ENCODE measurements at regions of chr1 and their contacts with region 1.

Region 1: DNA sequence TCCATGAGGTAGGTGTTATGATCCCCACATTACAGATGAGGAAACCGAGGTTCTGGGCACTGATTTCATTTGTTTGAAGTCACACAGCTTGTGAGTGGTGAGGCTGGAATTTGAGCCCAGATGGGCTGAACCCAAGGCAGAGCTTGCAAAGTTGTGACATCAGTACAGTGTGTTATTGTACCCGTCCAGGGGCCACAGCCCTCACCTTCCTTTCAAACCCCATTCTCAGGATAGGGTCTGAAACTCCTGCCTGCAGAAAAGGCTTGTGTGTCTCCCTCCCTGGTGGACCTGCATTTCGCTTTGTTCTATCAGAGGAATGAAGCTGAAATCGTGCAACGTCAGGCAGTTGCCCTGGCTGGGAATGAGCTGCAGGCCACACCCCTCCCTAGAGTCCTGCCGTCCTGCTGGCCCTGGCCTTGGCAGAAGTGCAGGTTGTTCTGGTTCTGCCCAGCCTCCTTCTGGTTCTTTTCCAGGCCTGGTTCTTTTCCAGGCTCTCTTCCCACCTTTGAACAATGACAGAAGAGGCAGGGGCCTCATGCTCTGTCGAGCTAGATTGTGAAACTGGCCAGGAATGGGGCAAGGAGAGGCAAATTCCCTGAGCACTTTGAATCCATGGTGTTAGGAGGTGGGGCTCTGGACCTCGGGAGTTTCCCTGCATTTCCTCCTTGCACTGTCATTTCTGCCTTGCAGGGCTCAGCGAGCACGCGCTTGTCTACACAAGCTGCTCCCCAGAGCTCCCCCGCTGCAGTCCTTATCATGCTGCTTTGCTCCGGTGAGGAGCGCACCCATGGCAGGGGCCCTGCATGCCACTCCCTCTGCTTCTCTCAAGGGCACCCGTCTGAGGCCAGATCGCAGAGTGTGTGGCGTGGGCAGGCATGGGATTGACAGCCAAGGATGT is 8.2 kb upstream of the MYOM3 start:
- DNase-seq: peak; percentile 72
- H3K4me3 ChIP-seq: no peak overlapping the region
- H3K27ac ChIP-seq: no peak overlapping the region
- H3K4me1 ChIP-seq: peaks cover 24% of the 10 kb centered on the region
- H3K27me3 ChIP-seq: no peaks in the 10 kb centered on the region
- CTCF ChIP-seq: no peak

Region 2: DNA sequence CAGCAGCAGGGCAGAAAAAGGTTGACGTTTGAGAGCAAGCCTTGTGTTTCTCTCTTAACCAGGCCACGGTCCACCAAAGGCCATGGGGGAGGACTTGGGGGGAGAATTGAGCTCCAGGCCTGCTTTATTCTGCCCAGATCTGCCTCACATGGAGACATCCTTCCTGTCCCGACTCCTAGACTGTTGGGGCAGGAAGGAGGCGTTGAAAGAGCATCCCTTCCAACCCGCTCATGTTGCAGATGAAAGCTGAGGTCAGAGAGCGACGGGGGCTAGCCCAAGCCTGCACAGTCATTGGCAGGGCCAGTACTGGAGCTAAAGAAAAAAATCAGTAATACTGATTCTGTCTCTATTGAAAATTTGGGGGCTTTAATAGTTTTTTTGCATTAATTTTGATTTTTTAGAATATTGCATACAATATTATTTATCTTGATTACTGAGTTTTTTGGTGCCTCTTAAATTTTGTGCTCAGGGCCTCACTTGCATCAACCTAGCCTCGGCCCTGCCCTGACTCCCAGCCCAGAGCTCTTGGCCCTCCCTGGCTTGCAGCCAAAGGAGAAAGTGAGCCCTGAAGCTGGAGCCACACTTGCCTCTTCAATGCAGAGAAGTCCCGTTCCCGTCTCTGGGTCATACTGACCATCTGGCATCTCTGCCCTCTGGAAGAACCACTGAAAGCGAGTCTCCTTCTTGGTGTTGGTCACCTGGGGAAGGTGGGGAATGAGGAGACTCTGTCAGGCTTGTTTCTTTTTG is 54.6 kb before region 1 on chr1:
- CTCF ChIA-PET with region 1: no interaction called
- dilution Hi-C with region 1: loop called (anchors 5 kb)
- in situ Hi-C with region 1: no loop called
- intact Hi-C with region 1: no loop called
- DNase-seq: no peak
- H3K4me3 ChIP-seq: no peak overlapping the region
- H3K27ac ChIP-seq: no peak overlapping the region
- H3K4me1 ChIP-seq: no peaks in the 10 kb centered on the region
- H3K27me3 ChIP-seq: no peaks in the 10 kb centered on the region
- CTCF ChIP-seq: no peak

Region 3: DNA sequence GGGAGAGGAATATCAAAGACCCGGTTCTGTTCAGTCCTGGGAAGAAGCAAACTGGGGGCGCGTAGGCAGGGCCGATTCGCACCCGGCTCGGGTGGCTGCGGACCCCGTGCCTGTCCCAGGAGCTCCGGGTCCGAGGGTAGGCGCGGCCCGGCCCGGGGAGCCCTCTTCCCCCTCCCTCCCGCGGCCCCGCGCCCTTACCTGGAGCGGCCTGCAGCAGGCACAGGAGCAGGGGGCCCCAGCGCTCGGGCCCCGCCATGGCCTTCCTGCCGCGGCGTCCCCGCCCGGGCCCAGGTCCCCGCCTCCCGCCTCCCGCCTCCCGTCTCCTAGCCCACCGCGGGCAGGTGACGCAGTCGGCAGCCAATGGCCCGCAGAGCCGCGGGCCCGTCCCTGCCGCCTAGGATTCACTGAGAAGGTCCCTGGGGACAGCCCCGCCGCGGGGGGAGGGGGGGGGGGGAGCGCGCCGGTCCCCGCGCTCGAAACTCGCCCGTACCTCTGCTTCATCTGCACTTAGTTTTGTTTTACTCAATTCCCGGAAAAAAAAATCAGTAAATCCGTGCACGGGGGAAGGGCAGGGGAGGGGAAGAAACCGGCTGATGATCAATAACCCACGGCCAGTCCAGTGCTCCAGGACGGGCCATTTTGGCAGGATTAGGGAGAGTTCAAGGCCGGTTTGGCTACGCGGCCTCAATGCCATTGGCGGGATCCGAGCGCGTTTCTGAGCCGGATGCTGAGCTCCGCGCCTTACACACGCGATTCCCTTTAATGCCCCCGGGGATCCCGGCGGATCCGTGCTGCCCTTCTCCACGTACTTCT is 67.1 kb after region 1 on chr1 and contains the start of gene IFNLR1:
- CTCF ChIA-PET with region 1: no interaction called
- dilution Hi-C with region 1: no loop called
- in situ Hi-C with region 1: no loop called
- intact Hi-C with region 1: loop called (anchors 2 kb)
- DNase-seq: peak; percentile 55
- H3K4me3 ChIP-seq: peak within 1 kb of the TSS; percentile 53 to 62 (median 58)
- H3K27ac ChIP-seq: peak within 1 kb of the TSS; percentile 49
- H3K4me1 ChIP-seq: peaks cover 40% of the 10 kb centered on the region
- H3K27me3 ChIP-seq: no peaks in the 10 kb centered on the region
- CTCF ChIP-seq: no peak
- total RNA-seq, gene IFNLR1: 7.8 to 12.5 TPM